AG04449 (cell line): ENCODE measurements at regions of chr11 and their contacts with region 1.

Region 1: DNA sequence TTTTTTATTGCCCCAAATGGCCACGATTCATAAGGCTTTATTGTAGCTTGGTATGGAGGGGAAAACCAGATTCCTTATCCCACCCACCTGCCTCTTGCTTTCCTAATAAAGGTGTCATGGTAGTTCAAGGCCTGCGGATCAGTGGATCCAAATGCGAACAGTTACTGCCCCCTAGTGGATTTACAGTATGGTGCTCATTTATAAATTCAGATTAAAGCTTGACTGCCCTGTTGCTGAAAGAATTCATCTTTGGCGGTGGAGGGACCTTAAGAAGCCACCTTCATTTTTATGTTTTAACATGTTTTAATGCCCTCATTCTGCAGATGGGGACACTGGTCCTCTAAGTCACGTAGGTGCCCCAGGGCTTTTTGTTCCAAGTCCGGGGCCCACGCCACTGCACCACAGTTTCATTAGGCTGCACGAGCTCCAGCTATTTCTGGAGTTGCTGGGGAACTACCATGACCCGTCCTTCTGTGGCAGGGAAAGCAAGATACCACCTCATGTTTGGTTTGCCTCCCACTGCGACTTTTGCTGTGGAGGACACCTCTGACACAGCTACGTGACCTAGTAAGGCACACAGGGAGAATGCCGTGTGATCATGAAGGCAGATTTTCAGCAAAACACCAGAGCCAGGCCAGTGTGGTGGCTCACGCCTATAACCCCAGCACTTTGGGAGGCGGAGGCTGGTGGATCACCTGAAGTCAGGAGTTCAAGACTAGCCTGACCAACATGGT is 15.6 kb upstream of the INCENP start:
- DNase-seq: no peak
- H3K4me3 ChIP-seq: no peak overlapping the region
- CTCF ChIP-seq: peak; percentile 53

Region 2: GRCh38 chr11:61816736-61817455 is 291.3 kb before region 1 on chr11 and contains the start of gene FADS1:
- CTCF ChIA-PET with region 1: interaction called, 55 read pairs
- POLR2A ChIA-PET with region 1: no interaction called
- DNase-seq: peak; percentile 60
- H3K4me3 ChIP-seq: peak within 1 kb of the TSS; percentile 82
- CTCF ChIP-seq: peak; percentile 89

Region 3: DNA sequence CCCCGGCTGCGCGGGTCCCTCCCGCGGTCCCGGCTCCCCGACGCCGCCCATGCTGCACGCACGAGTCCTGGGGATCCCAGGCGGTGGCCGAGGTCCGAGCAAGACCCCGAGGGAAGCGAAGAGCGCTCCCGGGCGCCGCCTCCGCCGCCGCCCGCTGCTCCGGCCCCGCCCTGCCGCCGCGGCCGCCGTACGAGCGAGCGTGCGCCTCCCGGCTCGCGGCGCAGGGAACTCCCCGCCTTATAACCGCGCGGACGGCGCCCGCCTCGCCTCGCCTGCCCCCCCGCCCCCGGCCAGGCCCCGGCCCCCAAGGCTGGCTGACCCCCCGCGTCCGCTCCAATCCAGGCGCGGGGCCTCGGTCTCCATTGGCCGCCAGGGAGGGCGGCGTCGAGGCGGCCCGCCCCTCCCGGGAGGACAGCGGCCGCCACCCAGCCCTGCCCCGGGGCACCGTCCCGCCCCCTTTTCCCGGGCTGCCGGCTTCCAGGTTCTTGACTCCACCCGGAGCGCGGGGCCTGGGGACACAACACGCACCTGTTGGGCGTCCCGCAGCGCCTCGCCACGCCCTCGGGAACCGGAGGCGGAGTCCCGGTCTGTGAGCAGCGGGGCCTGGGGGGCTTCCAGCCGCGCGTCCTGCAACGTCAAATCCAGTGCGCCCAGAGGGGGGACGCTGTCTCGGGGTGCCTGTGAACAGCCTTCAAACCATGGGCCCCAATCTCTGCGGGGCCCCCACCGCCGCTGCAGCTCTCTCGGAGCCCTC is 216.7 kb before region 1 on chr11 and contains the start of gene FADS3:
- CTCF ChIA-PET with region 1: interaction called, 258 read pairs
- POLR2A ChIA-PET with region 1: no interaction called
- DNase-seq: no peak
- H3K4me3 ChIP-seq: peak within 1 kb of the TSS; percentile 90
- CTCF ChIP-seq: no peak

Region 4: DNA sequence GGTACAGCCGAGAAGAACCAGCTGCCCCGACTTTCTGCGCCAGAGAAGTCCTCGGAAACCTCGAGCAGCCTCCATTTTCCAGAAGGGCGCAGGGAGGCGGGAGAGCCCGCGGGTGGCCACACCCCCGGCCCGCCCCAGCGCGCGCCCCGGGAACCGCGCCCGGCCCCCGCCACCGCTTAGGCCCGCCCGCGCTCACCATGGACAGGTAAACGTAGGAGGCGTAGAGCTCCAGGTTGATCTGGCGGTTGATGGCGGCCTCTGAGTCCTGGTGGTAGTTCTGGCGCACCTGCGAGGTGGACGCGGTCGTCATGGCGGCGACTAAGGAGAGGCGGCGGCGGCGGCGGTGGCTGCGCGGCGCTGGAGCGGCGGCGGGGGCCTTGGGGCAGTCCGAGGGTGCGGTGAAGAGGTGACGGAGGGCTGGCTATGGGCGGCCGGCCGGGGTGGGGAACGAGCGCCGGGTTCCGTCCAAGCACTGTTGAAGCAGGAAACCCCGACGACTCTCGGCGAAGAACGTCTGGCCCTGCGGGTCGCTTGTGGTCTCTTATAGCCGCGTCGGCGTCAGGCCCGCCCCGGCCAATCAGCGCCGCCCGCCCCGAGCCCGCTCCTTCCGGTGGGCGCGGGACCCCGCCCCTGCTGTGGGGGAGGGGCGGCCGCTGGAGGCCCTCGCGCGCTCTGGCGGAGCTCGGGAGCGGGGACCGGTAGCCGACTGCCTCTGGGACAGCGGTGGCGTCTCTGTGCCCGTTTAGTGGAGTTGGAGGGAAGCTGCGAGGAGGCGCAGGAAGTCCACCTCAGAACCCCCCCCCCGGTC is 140.9 kb before region 1 on chr11 and contains the start of gene FTH1:
- CTCF ChIA-PET with region 1: interaction called, 40 read pairs
- POLR2A ChIA-PET with region 1: interaction called, 15 read pairs
- DNase-seq: no peak
- H3K4me3 ChIP-seq: peak within 1 kb of the TSS; percentile 98
- CTCF ChIP-seq: no peak

Region 5: DNA sequence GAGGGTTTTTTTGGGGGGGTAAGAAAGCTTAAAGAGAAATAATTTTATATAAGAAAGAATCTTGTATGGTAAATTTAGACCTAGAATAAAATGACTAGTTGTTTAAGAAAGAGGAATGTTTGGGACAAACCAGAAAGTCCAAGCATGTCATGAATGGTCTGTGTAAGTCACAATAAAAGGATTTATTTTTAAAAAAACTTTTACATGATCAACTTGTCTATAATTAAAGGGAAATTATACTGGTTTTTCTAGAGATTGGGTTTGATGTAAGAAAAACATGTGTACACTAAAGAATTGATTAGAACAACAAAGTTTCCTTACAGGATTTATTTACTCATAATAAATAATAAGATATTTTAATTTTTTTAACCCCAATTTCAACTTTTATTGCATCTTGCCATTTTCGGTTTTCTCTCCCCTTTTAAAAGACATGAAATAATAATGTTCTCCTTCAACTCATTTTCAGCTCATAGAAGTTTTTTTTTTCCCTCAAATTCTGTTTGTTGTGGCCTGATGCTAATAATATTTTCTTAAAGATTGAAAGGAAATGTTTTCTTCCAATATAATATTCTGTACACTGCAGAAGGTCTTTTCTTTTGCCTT is 19.8 kb before region 1 on chr11:
- CTCF ChIA-PET with region 1: interaction called, 132 read pairs
- POLR2A ChIA-PET with region 1: no interaction called
- DNase-seq: no peak
- H3K4me3 ChIP-seq: no peak overlapping the region
- CTCF ChIP-seq: no peak

Region 6: GRCh38 chr11:62245271-62245753 is 137.1 kb after region 1 on chr11:
- CTCF ChIA-PET with region 1: no interaction called
- POLR2A ChIA-PET with region 1: no interaction called
- DNase-seq: no peak
- H3K4me3 ChIP-seq: no peak overlapping the region
- CTCF ChIP-seq: no peak

Region 7: GRCh38 chr11:62591448-62592145 is 483.4 kb after region 1 on chr11 and contains the start of gene TUT1:
- CTCF ChIA-PET with region 1: no interaction called
- POLR2A ChIA-PET with region 1: no interaction called
- DNase-seq: peak; percentile 97
- H3K4me3 ChIP-seq: peak within 1 kb of the TSS; percentile 77
- CTCF ChIP-seq: no peak